ENCODE measurements at regions of chr11 and their contacts with region 1.

Region 1: GRCh38 chr11:128905345-128906184 is 14.4 kb downstream of the KCNJ5 start:
- DNase-seq: peak in 6 of 9 experiments; percentile 13 to 67 (median 51)
- ATAC-seq: peak; percentile 77
- H3K4me3 ChIP-seq: peak overlapping the region; percentile 59 to 60
- H3K4me3 Mint-ChIP-seq: peak overlapping the region; percentile 79
- H3K27ac ChIP-seq: no peak overlapping the region
- H3K27ac Mint-ChIP-seq: no peak overlapping the region
- H3K4me1 ChIP-seq: peaks cover 7% of the 10 kb centered on the region
- H3K4me1 Mint-ChIP-seq: peaks cover 21% of the 10 kb centered on the region
- H3K27me3 ChIP-seq: peaks cover 0 to 2% of the 10 kb centered on the region in 2 experiments
- H3K27me3 Mint-ChIP-seq: peaks cover 40% of the 10 kb centered on the region
- CTCF ChIP-seq: peak; percentile 46

Region 2: GRCh38 chr11:128890543-128891368 is 14.8 kb before region 1 on chr11 and contains the start of gene KCNJ5:
- CTCF ChIA-PET with region 1: interaction called, 91 read pairs
- POLR2A ChIA-PET with region 1: no interaction called
- intact Hi-C with region 1: no loop called
- DNase-seq: peak in 2 of 9 experiments; percentile 22
- ATAC-seq: peak; percentile 36
- H3K4me3 ChIP-seq: peak within 1 kb of the TSS; percentile 23 to 30
- H3K4me3 Mint-ChIP-seq: peak within 1 kb of the TSS; percentile 78
- H3K27ac ChIP-seq: no peak within 1 kb of the TSS
- H3K27ac Mint-ChIP-seq: no peak within 1 kb of the TSS
- H3K4me1 ChIP-seq: peaks cover 9% of the 10 kb centered on the region
- H3K4me1 Mint-ChIP-seq: peaks cover 11% of the 10 kb centered on the region
- H3K27me3 ChIP-seq: peaks cover 16 to 19% of the 10 kb centered on the region in 2 experiments
- H3K27me3 Mint-ChIP-seq: peaks cover 52% of the 10 kb centered on the region
- CTCF ChIP-seq: no peak
- total RNA-seq, gene KCNJ5: not detected

Region 3: DNA sequence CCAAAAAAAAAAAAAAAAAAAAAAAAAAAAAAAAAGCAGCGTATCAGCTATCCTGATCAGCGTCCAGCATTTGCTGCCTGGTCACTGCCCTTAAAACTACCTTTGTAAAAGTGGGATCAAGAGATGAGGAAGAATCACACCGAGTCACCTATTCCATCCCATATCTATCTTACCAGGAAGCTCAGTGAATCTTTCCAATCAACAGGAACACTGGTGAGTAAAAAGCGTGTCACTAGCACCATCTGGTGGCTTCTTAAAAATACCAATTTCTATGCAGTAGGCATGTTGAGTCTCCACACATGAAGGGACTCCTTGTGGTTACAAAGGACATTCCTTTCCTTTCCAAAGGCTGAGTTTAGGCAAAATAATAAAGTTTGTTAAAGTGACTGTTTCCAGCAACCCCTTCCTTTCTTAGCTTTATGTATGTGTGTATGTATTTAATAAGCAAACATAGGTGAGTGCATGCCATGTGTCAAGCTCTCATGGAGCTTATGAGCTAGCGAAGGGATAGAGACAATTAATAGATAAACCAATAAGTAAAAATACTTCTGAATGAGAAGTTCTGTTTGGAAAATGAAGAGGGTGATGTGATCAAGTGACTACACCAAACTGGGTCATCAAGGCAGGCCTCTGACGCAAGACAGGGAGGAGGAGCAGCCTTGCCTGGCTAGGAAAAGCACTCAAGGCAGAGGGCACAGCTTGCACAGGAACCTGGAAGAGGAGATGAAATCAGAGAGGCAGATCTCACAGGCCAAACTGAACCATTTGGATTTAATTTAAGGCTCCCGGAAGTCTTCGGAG is 51.0 kb after region 1 on chr11:
- CTCF ChIA-PET with region 1: interaction called, 12 read pairs
- POLR2A ChIA-PET with region 1: no interaction called
- intact Hi-C with region 1: no loop called
- DNase-seq: peak in 3 of 9 experiments; percentile 12 to 66 (median 59)
- ATAC-seq: no peak
- H3K4me3 ChIP-seq: no peak overlapping the region
- H3K4me3 Mint-ChIP-seq: no peak overlapping the region
- H3K27ac ChIP-seq: no peak overlapping the region
- H3K27ac Mint-ChIP-seq: no peak overlapping the region
- H3K4me1 ChIP-seq: no peaks in the 10 kb centered on the region
- H3K4me1 Mint-ChIP-seq: peaks cover 2% of the 10 kb centered on the region
- H3K27me3 ChIP-seq: no peaks in the 10 kb centered on the region
- H3K27me3 Mint-ChIP-seq: peaks cover 8% of the 10 kb centered on the region
- CTCF ChIP-seq: peak; percentile 70

Region 4: GRCh38 chr11:129077191-129077590 is 171.6 kb after region 1 on chr11:
- CTCF ChIA-PET with region 1: no interaction called
- POLR2A ChIA-PET with region 1: no interaction called
- intact Hi-C with region 1: no loop called
- DNase-seq: no peak
- ATAC-seq: no peak
- H3K4me3 ChIP-seq: no peak overlapping the region
- H3K4me3 Mint-ChIP-seq: no peak overlapping the region
- H3K27ac ChIP-seq: no peak overlapping the region
- H3K27ac Mint-ChIP-seq: no peak overlapping the region
- H3K4me1 ChIP-seq: no peaks in the 10 kb centered on the region
- H3K4me1 Mint-ChIP-seq: no peaks in the 10 kb centered on the region
- H3K27me3 ChIP-seq: no peaks in the 10 kb centered on the region
- H3K27me3 Mint-ChIP-seq: no peaks in the 10 kb centered on the region
- CTCF ChIP-seq: no peak

Measured in CD8-positive, alpha-beta T cell (primary cell).